Activated T-helper 1 cell treated with anti-CD3 and anti-CD28 coated beads, Interleukin-12 subunit alpha, Interleukin-12 subunit beta, Interleukin-2, Interleukin-4 antibody, amounts not matched to agents 30 ng/mL and 10 ng/mL and 1 ng/mL, durations not matched to agents 14 hours and 24 hours and 36 hours (primary cell): ENCODE measurements at regions of chr7 and their contacts with region 1.

Region 1: DNA sequence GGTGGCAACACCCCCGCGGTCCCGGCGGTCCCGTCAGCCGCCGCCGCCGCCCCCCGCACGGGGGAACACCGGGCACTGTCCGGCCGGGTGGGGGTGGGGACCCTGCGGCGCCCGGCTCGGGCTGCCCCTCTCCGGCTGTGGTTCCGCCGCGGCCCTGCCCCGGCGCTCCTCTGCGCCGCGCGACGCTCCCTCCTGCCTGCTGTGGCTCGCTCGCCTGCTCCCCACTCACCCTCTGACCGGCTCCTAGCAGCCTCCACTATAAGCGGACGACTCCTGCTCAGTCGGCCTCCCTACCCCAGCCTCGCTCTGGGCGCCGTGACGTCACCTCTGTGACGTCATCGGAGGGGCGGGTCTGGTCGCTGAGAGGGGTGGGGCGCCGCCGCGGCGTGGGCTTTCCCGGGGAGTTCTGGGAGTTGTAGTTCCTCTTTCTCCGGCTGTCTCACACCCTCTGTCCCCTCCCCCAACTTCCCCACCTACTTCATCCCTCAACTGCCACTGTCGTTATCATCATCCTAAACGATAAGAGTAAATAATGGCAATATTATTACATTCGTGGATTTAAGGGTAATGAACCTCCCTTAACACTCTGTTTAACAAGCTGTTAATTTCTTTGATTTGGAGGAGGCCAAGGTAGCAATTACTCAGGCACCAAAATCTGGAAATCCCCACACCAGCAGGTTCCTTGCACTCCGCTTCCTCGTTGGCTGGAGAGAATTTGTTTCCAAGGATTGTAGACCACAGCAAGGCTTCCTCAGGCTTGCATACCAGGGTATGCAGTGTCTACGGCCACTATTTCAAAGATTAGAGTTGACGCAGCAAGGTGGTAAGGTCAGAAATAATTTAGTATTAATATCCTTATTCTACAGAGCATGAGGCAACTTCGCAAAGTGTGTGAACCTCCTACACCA is at the start of gene UBE2H:
- DNase-seq: peak; percentile 83
- H3K4me3 Mint-ChIP-seq: peak within 1 kb of the TSS; percentile 98
- H3K27ac Mint-ChIP-seq: peak within 1 kb of the TSS; percentile 100
- H3K4me1 Mint-ChIP-seq: peaks cover 10% of the 10 kb centered on the region
- H3K27me3 Mint-ChIP-seq: peaks cover 20% of the 10 kb centered on the region
- total RNA-seq, gene UBE2H: 27.1 TPM in 2 replicates

Region 2: DNA sequence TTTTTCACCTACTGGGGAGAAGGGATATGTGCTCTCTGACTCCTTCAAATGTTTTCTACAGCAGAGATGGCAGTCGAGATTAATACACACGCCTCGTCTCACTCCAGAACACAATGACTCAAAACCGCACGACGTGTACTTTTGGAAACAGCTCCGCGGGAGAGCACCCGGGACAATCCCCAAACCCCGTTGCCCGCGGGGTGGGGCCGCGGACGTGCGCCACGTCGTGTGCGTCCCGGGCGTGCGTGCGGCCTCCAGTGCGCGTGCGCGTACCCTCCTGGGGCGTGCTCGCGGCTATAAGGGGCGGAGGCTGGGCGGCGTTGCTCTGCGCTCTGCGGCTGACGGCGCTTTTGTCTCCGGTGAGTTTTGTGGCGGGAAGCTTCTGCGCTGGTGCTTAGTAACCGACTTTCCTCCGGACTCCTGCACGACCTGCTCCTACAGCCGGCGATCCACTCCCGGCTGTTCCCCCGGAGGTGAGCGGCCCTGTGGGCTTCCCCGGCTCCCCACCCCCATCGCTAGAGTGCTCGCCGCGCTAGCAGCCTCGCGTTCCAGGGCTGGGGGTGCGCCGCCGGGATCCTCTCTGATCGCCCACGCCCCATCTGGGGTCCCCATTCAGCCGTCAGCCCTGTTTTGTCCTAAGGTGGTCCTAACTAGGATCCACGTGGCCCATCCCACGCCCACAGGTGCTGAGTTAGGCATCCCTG is 1497.2 kb before region 1 on chr7 and contains the start of gene HILPDA:
- intact Hi-C with region 1: loop called (anchors 5 kb)
- DNase-seq: peak; percentile 95
- H3K4me3 Mint-ChIP-seq: peak within 1 kb of the TSS; percentile 96
- H3K27ac Mint-ChIP-seq: peak within 1 kb of the TSS; percentile 99
- H3K4me1 Mint-ChIP-seq: peaks cover 67% of the 10 kb centered on the region
- H3K27me3 Mint-ChIP-seq: peaks cover 16% of the 10 kb centered on the region
- total RNA-seq, gene HILPDA: 53.7 and 56.9 TPM in 2 replicates

Region 3: DNA sequence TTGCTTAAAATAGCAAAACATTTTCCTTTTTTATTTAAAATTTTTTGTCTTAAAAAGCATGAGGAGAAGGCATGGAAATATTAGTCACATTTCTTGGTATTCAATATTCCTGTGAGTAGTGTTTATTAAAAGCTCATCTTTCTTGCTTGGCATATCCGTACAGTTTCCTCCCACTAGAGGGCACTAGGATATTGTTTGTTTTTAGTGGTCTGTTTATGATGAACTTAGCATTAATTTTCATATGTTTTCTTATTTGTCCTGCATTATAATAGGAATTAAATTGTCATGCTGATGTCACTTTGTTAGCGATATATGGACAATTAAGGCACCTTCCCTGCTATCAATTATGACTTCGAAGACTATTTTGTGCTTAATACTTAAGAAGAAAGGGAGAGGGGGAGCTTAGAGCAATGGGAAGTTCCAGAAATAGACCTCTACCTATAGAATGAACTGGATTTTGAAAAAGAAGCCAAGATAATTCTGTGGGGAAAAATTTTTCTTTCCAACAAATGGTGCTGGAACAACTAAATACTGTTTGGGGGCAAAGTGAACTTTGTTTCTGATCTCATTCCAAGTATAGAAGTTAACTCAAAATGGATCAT is 609.7 kb before region 1 on chr7:
- intact Hi-C with region 1: loop called (anchors 10 kb)
- DNase-seq: no peak
- H3K4me3 Mint-ChIP-seq: no peak overlapping the region
- H3K27ac Mint-ChIP-seq: no peak overlapping the region
- H3K4me1 Mint-ChIP-seq: peaks cover 42% of the 10 kb centered on the region
- H3K27me3 Mint-ChIP-seq: no peaks in the 10 kb centered on the region

Region 4: DNA sequence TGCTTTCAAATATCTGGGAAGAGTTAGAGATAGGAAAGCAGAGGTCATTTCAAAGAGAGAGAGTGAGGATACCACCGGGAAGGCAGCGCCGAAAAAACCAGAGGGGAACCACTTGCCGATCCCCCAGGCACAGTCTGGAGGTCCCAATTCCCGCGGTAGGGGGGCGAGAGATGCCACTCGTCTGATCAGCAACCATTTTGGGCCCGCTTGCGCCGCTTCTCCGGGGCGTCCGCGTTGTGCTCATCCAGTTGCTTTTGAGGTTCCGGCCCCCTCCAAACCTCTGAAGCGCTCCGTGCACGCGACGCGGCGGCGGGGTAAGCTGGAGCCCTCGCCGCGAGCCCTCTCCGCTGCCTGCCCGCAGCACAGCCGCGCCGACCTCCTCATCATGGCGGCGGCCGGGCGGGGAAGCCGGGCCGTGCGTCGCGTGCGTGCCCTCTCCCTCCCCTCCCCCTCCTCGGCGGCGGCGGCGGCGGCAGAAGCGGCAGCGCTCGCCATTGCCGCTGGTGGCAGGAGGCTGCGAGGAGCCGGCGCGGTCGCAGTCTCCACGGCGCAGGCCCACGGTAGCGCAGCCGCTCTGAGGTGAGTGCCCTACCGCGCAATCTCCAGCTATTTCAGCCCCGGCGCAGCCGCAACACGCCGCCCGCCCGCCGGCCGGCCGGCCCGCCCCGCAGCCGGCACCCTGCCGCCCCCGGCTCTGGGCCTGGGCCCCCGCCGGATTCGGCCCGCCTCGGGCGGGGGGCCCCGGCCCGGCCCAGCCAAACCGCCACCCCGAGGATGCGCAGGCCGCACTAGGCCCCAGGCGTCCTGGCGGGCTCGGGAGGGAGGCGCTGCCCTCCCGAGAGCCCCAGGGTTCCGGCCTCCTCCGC is 341.4 kb before region 1 on chr7 and contains the start of gene NRF1:
- intact Hi-C with region 1: loop called (anchors 2 kb)
- DNase-seq: peak; percentile 89
- H3K4me3 Mint-ChIP-seq: peak within 1 kb of the TSS; percentile 98
- H3K27ac Mint-ChIP-seq: peak within 1 kb of the TSS; percentile 99
- H3K4me1 Mint-ChIP-seq: peaks cover 48% of the 10 kb centered on the region
- H3K27me3 Mint-ChIP-seq: no peaks in the 10 kb centered on the region
- total RNA-seq, gene NRF1: 22.8 and 25.9 TPM in 2 replicates

Region 5: DNA sequence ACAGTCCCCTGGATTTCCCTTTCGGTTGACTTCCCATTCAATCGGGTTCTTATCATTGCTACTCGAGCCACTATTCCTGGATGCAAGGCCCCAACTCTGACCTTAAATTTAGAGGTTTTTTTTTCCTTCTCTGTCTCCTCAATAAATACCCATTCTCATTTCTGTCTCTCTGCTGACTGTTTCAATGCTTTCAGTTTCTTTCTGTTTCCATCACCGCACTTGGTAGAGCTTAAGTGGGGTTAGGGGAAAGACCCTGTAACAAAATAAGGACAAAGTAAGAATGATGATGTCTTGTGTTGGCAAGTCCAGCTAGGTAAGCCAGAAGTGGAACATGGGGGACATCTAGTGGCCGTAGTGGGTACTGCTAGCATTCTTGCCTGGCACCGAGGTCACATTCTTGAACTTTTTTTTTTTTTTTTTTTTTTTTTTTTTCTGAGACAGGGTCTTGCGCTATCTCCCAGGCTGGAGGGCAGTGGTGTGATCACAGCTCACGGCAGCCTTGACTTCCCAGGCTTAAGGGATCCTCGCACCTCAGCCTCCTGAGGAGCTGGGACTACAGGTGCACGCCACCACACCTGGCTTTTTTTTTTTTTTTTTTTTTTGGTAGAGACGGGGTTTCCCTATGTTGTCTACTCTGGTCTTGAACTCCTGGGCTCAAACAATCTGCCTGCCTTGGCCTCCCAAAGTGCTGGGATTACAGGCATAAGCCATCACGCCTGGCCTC is 57.9 kb after region 1 on chr7:
- intact Hi-C with region 1: loop called (anchors 1 kb)
- DNase-seq: peak; percentile 76
- H3K4me3 Mint-ChIP-seq: no peak overlapping the region
- H3K27ac Mint-ChIP-seq: peak overlapping the region; percentile 75
- H3K4me1 Mint-ChIP-seq: peaks cover 5% of the 10 kb centered on the region
- H3K27me3 Mint-ChIP-seq: no peaks in the 10 kb centered on the region

Region 6: DNA sequence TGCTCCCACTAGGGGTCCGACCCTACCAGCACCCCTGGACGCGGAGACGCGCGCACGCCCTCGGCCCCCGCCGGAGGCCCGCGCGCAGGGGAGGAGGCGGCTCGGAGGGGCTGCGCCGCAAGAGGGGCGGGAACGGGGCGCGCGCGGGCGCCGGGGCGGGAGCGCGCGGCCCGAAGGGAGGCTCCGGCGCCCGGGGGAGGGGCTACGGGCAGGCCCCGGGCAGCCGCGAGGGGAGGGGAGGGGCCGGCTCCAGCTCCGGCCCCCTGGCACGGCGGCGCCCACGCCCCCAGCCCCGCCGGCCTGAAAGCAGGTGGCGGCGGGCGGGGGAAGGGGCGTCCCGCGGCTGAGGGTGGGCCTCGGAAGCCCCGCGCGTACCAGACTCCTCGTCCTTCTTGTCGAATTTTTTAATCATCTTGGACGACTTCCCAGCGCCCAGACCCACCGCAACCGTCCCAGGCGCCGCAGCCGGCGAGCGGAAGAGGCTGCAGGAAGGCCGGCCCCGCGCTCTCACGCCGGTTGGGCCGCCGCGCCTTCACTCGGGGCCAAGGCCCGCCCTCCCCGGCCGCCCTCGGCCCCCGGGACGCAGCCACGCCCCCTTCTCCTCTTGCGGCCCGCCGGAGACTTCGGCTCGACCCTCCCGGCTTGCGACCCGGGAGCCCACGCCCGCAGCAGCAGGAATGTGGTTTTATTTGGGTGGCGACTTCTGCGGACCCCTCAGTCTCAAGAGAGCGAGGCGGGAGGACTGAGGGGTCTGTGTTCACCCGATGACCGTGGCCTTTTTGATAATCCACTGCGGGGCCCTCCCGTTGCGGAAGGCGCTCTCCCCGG is 715.6 kb after region 1 on chr7 and contains the start of gene COPG2:
- intact Hi-C with region 1: loop called (anchors 10 kb)
- DNase-seq: peak; percentile 76
- H3K4me3 Mint-ChIP-seq: peak within 1 kb of the TSS; percentile 88
- H3K27ac Mint-ChIP-seq: peak within 1 kb of the TSS; percentile 41
- H3K4me1 Mint-ChIP-seq: peaks cover 22% of the 10 kb centered on the region
- H3K27me3 Mint-ChIP-seq: no peaks in the 10 kb centered on the region
- total RNA-seq, gene COPG2: 19.3 and 20.9 TPM in 2 replicates

Region 7: DNA sequence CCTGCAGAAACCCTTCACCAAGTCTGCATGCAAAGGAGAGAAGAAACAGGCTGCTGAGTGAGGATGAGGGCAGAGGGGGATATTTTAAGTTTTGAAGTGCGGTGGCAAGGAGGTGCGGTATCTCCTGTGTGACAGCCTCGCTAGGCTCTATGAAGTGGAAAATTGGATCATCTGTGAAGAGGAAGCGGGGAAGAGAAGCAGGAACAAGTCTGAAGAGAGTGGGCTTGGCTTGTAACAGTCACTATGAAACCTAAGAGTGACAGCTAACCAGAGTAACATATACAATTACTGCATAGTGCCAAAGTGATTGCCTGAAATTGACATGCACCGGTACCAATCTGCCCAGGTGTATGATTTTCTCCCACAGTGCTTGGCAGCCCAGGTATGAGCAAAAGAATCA is 1068.6 kb after region 1 on chr7:
- intact Hi-C with region 1: no loop called
- DNase-seq: no peak
- H3K4me3 Mint-ChIP-seq: peak overlapping the region; percentile 5
- H3K27ac Mint-ChIP-seq: peak overlapping the region; percentile 87
- H3K4me1 Mint-ChIP-seq: peaks cover 43% of the 10 kb centered on the region
- H3K27me3 Mint-ChIP-seq: no peaks in the 10 kb centered on the region